Posterior vena cava (tissue), 2 donors: ENCODE measurements at regions of chr2 and their contacts with region 1.

Region 1: DNA sequence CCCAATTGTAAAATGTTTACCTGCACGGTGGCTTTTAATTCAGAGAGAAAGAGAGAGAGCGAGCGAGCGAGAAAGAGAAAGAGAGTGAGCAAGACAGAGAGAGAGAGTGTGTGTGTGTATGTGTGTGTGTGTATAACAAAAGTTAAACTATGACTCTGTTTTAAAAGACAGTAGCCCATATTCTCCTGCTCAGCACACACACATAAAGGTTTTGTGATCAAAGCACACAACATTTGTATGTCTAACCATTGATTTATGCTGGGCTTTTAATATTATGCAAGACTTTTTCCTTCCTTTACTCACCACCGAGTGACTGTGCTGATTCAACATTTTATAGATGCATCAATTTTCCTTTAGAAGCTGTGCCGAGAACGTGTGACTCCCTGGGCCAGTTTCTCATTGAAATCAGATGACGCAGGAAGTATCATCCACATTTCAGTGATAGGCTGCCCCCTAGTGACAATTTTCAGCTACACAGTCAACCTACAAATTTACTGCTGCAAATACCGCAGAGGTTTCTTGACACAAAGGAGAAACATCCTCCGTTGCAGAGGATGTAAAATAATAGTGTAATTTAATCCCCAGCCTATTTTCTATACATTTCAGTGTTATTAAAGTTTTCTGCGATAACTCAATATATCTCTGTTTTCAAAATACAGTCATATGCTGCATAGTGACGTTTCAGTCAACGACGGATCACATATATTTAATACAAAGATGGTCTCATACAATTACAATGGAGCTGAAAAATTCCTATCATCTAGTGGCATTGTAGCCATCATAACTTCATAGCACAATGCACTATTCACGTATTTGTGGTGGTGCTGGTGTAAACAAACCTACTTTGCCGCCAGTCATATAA is 165.9 kb upstream of the TANK start:
- DNase-seq: peak; percentile 83

Region 2: DNA sequence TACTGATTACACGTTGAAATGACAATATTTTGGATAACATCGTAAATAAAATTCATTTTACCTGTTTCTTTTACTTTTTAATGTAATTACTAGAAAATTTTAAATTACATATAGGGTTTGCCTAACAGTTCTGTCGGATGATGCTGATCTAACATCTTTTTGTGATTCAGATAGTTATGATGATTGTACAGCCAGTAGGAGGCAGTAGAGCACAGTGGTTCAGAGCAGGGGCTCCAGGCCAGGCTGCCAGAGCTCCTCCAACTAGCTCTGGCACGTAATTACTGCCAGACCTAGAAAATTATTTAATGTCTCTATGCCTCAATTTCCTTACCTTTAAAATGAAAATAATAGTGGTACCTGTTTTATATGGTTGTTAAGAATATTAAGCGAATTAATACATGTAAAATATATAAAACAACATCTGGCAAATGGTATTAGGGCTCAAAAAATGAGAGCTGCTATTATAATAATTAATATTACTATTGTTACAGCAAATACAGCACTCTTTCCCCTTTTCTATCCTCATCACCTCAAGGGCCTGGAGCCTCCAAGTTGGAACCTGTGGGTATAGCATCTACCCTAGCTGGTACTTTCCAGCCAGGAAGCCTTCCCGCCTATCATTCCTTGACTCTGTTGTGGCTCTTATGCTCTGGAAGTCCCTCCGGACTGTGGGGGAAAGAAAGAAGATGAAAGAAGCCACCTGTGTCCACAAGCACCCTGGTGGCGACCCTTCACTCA is 884.3 kb before region 1 on chr2:
- intact Hi-C with region 1: loop called in 1 of 2 experiments (anchors 10 kb)
- DNase-seq: peak; percentile 82

Region 3: GRCh38 chr2:160956243-160956802 is 38.0 kb before region 1 on chr2:
- intact Hi-C with region 1: no loop called
- DNase-seq: peak; percentile 85